ENCODE measurements at regions of chrX and their contacts with region 1.

Region 1: DNA sequence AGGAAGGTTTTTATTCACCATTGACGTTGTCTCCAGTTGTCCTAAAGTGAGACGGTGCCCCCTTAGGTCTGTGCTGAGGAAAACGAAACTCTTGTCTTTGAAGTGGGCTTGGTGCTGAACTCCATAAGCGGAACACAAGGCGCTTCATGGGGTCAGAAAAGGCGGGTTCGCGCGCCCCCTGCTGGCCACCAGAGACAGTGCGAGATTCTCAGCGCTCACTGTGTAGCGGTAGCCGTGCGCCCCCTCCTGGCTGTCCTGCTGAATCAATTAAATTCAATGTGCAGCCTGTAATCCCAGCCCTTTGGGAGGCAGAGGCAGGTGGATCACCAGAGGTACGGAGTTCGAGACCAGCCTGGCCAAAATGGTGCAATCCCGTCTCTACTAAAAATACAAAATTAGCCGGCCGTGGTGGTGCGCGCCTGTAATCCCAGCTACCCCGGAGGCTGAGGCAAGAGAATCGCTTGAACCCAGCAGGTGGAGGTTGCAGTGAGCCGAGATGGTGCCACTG is 64.1 kb downstream of the RLIM start:
- DNase-seq: peak; percentile 63 to 93 (median 83)
- ATAC-seq: peak; percentile 97
- H3K4me3 ChIP-seq: no peak overlapping the region
- H3K4me3 Mint-ChIP-seq: peak overlapping the region; percentile 66
- H3K27ac ChIP-seq: no peak overlapping the region
- H3K27ac Mint-ChIP-seq: no peak overlapping the region
- H3K4me1 ChIP-seq: no peaks in the 10 kb centered on the region
- H3K4me1 Mint-ChIP-seq: peaks cover 2% of the 10 kb centered on the region
- H3K27me3 ChIP-seq: no peaks in the 10 kb centered on the region
- H3K27me3 Mint-ChIP-seq: no peaks in the 10 kb centered on the region
- CTCF ChIP-seq: peak; percentile 84

Region 2: GRCh38 chrX:73855546-73855945 is 694.8 kb before region 1 on chrX:
- CTCF ChIA-PET with region 1: no interaction called
- POLR2A ChIA-PET with region 1: no interaction called
- intact Hi-C with region 1: loop called (anchors 1 to 5 kb)
- DNase-seq: peak; percentile 32 to 84 (median 55)
- ATAC-seq: peak; percentile 42
- H3K4me3 ChIP-seq: no peak overlapping the region
- H3K4me3 Mint-ChIP-seq: no peak overlapping the region
- H3K27ac ChIP-seq: no peak overlapping the region
- H3K27ac Mint-ChIP-seq: no peak overlapping the region
- H3K4me1 ChIP-seq: no peaks in the 10 kb centered on the region
- H3K4me1 Mint-ChIP-seq: no peaks in the 10 kb centered on the region
- H3K27me3 ChIP-seq: no peaks in the 10 kb centered on the region
- H3K27me3 Mint-ChIP-seq: no peaks in the 10 kb centered on the region
- CTCF ChIP-seq: no peak

Region 3: DNA sequence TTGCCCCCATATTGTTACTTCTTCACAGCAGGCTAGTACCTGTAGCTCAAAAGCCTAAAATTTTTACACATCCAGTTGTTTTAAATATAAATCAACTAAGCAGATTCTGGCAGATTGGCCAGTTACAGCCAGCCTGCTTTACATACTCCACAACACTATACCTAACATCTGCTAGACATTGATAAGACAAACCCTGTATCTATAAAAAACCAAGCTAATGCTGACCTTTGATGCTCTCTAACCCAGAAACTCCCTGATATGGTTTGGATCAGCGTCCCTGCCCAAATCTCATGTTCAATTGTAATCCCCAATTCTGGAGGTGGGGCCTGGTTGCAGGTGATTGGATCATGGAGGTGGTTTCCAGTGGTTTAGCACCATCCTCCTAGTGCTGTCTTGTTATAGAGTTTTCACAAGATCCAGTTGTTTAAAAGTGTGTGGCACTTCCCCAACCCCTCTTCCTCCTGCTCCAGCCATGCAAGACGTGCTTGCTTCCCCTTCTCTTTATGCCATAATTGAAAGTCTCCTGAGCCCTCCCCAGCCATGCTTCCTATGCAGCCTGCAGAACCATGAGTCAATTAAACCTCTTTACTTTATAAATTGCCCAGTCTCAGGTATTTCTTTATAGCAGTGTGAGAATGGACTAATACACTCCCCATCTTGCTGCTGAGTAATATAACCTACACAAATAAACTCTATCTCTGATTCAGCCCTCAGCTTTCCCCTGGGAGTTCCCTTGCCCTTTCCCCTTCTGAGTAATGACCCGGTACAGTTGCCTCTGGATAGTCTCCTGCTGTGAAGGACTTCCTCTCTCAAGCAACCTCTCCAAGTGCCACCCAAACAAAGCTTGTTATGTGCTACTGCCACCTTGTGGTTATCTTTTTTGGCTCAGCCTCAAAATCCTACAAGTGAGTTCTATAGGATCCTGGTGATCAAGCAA is 206.7 kb before region 1 on chrX:
- CTCF ChIA-PET with region 1: no interaction called
- POLR2A ChIA-PET with region 1: no interaction called
- intact Hi-C with region 1: loop called in 1 of 2 experiments (anchors 1 kb)
- DNase-seq: peak; percentile 1 to 67 (median 33)
- ATAC-seq: peak; percentile 40
- H3K4me3 ChIP-seq: no peak overlapping the region
- H3K4me3 Mint-ChIP-seq: no peak overlapping the region
- H3K27ac ChIP-seq: no peak overlapping the region
- H3K27ac Mint-ChIP-seq: no peak overlapping the region
- H3K4me1 ChIP-seq: no peaks in the 10 kb centered on the region
- H3K4me1 Mint-ChIP-seq: peaks cover 2% of the 10 kb centered on the region
- H3K27me3 ChIP-seq: no peaks in the 10 kb centered on the region
- H3K27me3 Mint-ChIP-seq: peaks cover 3% of the 10 kb centered on the region
- CTCF ChIP-seq: peak; percentile 36

Region 4: DNA sequence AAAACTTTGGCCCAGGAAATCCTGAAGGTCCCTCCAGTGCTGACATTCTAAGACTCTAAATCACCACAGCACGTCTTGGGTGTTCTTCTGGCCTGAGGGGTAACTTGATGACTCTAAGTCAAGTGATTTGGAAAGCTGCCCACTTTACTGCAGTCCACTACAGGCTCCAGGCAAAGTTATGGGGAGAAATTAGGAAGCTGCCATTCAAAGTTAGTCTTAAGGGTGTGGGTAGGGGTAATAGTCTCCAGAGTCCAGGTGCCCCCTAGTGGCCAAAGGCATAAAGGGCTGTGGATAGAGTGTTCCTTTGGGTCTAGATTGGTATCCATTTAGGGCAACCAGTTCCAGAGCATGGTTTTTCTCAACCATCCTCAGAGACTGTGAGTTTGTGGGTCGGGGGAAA is 167.7 kb before region 1 on chrX:
- CTCF ChIA-PET with region 1: no interaction called
- POLR2A ChIA-PET with region 1: no interaction called
- intact Hi-C with region 1: loop called (anchors 1 to 5 kb)
- DNase-seq: peak; percentile 5 to 67 (median 51)
- ATAC-seq: no peak
- H3K4me3 ChIP-seq: no peak overlapping the region
- H3K4me3 Mint-ChIP-seq: no peak overlapping the region
- H3K27ac ChIP-seq: no peak overlapping the region
- H3K27ac Mint-ChIP-seq: no peak overlapping the region
- H3K4me1 ChIP-seq: no peaks in the 10 kb centered on the region
- H3K4me1 Mint-ChIP-seq: no peaks in the 10 kb centered on the region
- H3K27me3 ChIP-seq: no peaks in the 10 kb centered on the region
- H3K27me3 Mint-ChIP-seq: peaks cover 5% of the 10 kb centered on the region
- CTCF ChIP-seq: peak; percentile 29

Region 5: DNA sequence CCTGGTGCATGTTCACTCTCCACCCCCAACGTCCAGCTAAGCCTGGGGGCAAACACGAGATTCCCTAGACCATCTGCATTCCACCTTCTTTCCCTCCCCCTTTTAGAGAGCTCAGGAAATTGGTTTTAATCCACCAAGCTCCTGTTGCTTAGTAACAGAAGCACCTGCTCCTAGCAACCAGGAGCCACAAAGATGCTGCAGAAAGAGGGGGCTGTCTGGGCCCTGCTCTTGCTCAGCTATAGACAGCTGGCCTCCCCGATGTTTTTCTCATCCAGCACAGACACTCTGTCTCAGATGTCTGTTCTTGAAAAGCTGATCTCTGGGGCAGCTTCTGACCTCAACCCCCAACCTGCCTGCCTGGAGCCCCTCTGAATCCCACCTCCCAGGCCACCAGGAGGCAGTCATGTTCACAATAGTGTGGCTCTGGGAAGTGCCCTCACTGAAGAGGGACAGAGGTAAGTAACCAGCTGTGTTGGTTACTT is 57.6 kb before region 1 on chrX:
- CTCF ChIA-PET with region 1: no interaction called
- POLR2A ChIA-PET with region 1: no interaction called
- intact Hi-C with region 1: loop called (anchors 1 kb)
- DNase-seq: peak in 5 of 9 experiments; percentile 5 to 45 (median 13)
- ATAC-seq: no peak
- H3K4me3 ChIP-seq: no peak overlapping the region
- H3K4me3 Mint-ChIP-seq: no peak overlapping the region
- H3K27ac ChIP-seq: no peak overlapping the region
- H3K27ac Mint-ChIP-seq: no peak overlapping the region
- H3K4me1 ChIP-seq: no peaks in the 10 kb centered on the region
- H3K4me1 Mint-ChIP-seq: no peaks in the 10 kb centered on the region
- H3K27me3 ChIP-seq: no peaks in the 10 kb centered on the region
- H3K27me3 Mint-ChIP-seq: peaks cover 3% of the 10 kb centered on the region
- CTCF ChIP-seq: no peak

Region 6: GRCh38 chrX:74536152-74536831 is 14.1 kb before region 1 on chrX:
- CTCF ChIA-PET with region 1: interaction called, 5 read pairs
- POLR2A ChIA-PET with region 1: interaction called, 3 read pairs
- intact Hi-C with region 1: loop called in 1 of 2 experiments (anchors 1 kb)
- DNase-seq: peak in 6 of 9 experiments; percentile 11 to 53 (median 28)
- ATAC-seq: peak; percentile 41
- H3K4me3 ChIP-seq: peak overlapping the region; percentile 65 to 70
- H3K4me3 Mint-ChIP-seq: peak overlapping the region; percentile 85
- H3K27ac ChIP-seq: peak overlapping the region; percentile 37 to 63
- H3K27ac Mint-ChIP-seq: peak overlapping the region; percentile 77
- H3K4me1 ChIP-seq: peaks cover 4% of the 10 kb centered on the region
- H3K4me1 Mint-ChIP-seq: peaks cover 15% of the 10 kb centered on the region
- H3K27me3 ChIP-seq: no peaks in the 10 kb centered on the region
- H3K27me3 Mint-ChIP-seq: no peaks in the 10 kb centered on the region
- CTCF ChIP-seq: no peak

Region 7: GRCh38 chrX:75603833-75604232 is 1053.5 kb after region 1 on chrX:
- CTCF ChIA-PET with region 1: no interaction called
- POLR2A ChIA-PET with region 1: no interaction called
- intact Hi-C with region 1: loop called in 1 of 2 experiments (anchors 5 kb)
- DNase-seq: peak in 2 of 9 experiments; percentile 17 to 43
- ATAC-seq: no peak
- H3K4me3 ChIP-seq: no peak overlapping the region
- H3K4me3 Mint-ChIP-seq: no peak overlapping the region
- H3K27ac ChIP-seq: no peak overlapping the region
- H3K27ac Mint-ChIP-seq: no peak overlapping the region
- H3K4me1 ChIP-seq: no peaks in the 10 kb centered on the region
- H3K4me1 Mint-ChIP-seq: no peaks in the 10 kb centered on the region
- H3K27me3 ChIP-seq: no peaks in the 10 kb centered on the region
- H3K27me3 Mint-ChIP-seq: no peaks in the 10 kb centered on the region
- CTCF ChIP-seq: peak; percentile 60